ENCODE measurements at regions of chr1 and their contacts with region 1.

Region 1: GRCh38 chr1:111507411-111508201 is 4.2 kb upstream of the ADORA3 start:
- DNase-seq: peak in 34 of 35 experiments; percentile 20 to 65 (median 36)
- ATAC-seq: peak; percentile 63 to 75 (median 70)
- H3K4me3 ChIP-seq: peak overlapping the region; percentile 42 to 44
- H3K4me3 Mint-ChIP-seq: peak overlapping the region; percentile 68 to 75 (median 75)
- H3K27ac ChIP-seq: peak overlapping the region; percentile 90
- H3K27ac Mint-ChIP-seq: peak overlapping the region; percentile 95 to 98
- H3K4me1 ChIP-seq: peaks cover 66 to 88% of the 10 kb centered on the region in 2 experiments
- H3K4me1 Mint-ChIP-seq: peaks cover 56 to 59% (median 57%) of the 10 kb centered on the region in 3 donors
- H3K27me3 ChIP-seq: no peaks in the 10 kb centered on the region
- H3K27me3 Mint-ChIP-seq: no peaks in the 10 kb centered on the region

Region 2: DNA sequence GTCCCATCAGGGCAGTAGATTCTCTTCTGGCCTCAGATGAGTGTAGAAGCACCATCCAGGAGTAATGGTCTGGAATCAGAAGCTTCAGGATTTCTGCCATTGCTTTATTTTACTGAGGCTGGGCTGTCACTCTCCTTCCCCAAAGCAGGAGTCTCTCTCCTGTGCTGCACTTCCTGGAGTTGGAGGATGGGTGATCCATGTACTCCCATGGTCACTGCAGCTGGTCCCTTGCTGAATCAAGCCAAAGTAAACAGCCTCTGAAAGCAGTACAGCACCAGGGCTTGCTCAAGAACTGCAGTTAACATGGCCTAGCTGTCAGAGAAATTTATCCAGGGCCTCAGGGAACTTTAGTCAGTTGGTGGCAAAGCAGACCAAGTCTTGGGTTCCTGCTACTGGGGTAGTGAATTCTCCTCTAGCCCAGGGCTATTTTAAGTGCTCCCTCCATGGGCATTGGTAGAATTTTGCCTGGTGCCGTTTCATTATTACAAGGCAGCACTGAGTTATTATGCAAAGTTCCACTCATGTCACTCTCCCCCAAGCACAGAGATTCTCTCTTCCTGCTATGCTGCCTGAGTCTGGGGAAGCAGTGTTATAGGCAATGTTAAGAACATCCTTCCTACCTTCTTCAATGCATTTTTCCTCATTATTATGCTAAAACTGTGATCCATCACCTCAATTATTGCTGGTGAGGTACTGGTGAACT is 397.3 kb before region 1 on chr1:
- CTCF ChIA-PET with region 1: no interaction called
- POLR2A ChIA-PET with region 1: no interaction called
- DNase-seq: no peak
- ATAC-seq: no peak
- H3K4me3 ChIP-seq: no peak overlapping the region
- H3K4me3 Mint-ChIP-seq: no peak overlapping the region
- H3K27ac ChIP-seq: no peak overlapping the region
- H3K27ac Mint-ChIP-seq: no peak overlapping the region
- H3K4me1 ChIP-seq: no peaks in the 10 kb centered on the region
- H3K4me1 Mint-ChIP-seq: no peaks in the 10 kb centered on the region
- H3K27me3 ChIP-seq: no peaks in the 10 kb centered on the region
- H3K27me3 Mint-ChIP-seq: no peaks in the 10 kb centered on the region

Region 3: DNA sequence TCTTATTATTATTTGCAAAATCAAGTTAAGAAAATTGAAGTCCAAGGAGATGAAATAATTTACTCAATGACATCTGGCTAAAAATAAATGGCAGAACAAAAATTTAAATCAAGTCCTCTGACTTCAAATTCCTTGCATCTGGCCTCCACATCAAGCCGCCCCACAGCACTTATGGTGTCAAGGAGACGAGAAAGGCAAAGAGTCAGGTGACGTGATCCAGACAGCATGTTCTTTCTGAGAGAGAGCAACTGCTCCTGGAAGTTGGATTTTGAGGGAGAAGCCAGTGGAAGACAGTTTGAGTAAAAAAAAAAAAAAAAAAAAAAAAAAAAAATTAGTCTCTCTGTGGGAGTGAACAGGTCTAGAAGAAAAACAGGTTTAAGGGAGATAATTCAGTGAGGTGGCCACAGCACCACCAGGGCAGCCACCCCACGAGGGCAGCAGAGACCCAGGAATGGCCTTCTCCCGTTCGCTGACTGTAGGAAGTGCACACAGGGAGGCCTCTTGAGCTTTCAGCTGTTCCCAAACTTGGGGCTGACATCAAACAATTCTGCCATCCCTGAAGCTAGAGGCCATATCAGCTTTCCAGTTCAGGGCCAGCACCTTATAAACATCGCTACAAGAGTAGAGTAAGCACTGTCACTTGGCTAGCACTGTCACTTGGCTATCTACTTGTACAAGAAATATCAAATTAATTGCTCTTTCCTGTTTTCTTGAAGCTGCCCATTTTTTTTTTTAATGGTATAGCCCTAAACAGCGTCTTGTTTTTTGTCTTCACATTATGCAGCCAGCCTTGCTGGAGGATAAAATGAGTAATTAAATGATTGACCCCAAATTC is 26.0 kb before region 1 on chr1:
- CTCF ChIA-PET with region 1: interaction called, 3 to 32 read pairs
- POLR2A ChIA-PET with region 1: interaction called in 1 of 2 experiments, 3 read pairs
- DNase-seq: peak in 33 of 35 experiments; percentile 11 to 70 (median 36)
- ATAC-seq: peak; percentile 45 to 70 (median 64)
- H3K4me3 ChIP-seq: no peak overlapping the region
- H3K4me3 Mint-ChIP-seq: no peak overlapping the region
- H3K27ac ChIP-seq: no peak overlapping the region
- H3K27ac Mint-ChIP-seq: peak overlapping the region in 1 of 2 donors; percentile 44
- H3K4me1 ChIP-seq: peaks cover 10 to 20% of the 10 kb centered on the region in 2 experiments
- H3K4me1 Mint-ChIP-seq: peaks cover 37 to 54% (median 42%) of the 10 kb centered on the region in 3 donors
- H3K27me3 ChIP-seq: no peaks in the 10 kb centered on the region
- H3K27me3 Mint-ChIP-seq: no peaks in the 10 kb centered on the region

Region 4: DNA sequence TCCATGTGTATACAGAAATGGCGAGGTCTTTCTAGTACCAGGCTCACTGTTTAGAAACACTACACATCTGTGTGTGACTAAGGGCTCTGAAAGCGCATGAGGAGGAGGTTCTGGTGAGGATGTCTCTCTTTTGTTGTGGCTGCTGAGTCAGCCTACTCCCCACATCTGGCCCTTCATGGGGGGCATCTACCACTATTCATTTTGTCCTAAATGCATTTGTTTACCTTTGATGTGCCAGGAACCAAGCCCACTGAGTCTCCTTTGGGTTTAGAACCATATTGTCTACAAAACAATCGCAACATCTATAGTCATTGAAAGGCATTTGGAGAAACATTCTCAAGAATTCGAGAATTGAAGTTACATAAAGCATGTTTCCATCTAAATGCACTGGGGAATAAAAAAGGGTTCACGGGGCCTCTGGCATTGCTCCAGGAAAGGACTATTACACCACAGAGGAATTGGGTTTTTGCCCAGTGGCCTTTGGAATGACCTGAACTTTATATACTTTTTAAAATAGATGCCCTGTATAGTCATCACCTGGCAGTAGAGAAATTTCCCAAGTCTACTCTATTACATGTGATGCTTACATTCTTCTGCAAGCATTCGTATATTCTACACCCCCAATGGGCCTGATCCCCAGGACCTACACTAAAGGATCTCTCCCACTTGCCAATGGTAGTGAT is 30.9 kb after region 1 on chr1:
- CTCF ChIA-PET with region 1: no interaction called
- POLR2A ChIA-PET with region 1: no interaction called
- DNase-seq: no peak
- ATAC-seq: no peak
- H3K4me3 ChIP-seq: no peak overlapping the region
- H3K4me3 Mint-ChIP-seq: no peak overlapping the region
- H3K27ac ChIP-seq: no peak overlapping the region
- H3K27ac Mint-ChIP-seq: no peak overlapping the region
- H3K4me1 ChIP-seq: no peaks in the 10 kb centered on the region
- H3K4me1 Mint-ChIP-seq: no peaks in the 10 kb centered on the region
- H3K27me3 ChIP-seq: no peaks in the 10 kb centered on the region
- H3K27me3 Mint-ChIP-seq: peaks cover 5 to 8% of the 10 kb centered on the region in 2 donors

Region 5: DNA sequence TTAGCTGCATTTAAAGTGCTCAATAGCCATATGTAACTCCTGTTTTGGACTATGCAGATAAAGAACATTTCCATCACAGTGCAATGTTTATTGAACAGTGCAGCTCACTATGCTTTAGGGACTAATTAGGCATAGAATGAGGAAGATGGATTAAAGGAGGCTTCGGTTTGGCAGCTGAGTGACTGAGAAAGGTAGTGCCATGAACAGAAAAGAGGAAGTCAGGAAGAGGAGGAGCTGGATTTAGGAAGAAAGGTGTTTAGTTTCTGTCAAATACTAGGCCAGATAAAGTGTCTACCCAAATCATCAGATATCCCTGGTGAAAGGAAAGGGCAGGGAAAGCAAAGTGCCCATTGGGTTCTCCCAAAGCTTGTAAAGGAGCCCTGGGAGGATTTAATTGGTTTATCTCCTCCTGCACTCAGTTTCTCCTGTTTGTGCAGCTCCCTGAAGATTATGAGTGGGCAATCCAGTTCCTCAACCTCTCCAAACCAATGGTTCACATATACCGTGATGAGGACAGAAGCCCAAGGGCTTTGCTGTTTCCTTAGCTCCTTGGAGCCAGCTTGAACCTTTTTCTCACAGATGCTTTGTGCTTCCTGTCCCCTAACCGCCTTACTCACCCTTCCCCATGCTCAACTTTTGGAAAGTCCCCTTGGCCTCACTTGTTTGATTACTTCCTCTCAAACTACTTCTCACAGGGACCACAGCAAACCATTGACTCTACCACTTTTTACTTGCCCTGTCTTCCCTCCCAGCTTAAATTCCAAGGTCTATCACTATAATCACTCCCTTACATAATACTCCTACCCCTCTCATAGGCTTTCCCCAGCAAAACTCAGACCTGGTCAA is 108.5 kb after region 1 on chr1:
- CTCF ChIA-PET with region 1: interaction called, 7 to 10 read pairs
- POLR2A ChIA-PET with region 1: no interaction called
- DNase-seq: peak in 29 of 35 experiments; percentile 14 to 81 (median 37)
- ATAC-seq: peak in 3 of 4 experiments; percentile 12 to 50 (median 32)
- H3K4me3 ChIP-seq: no peak overlapping the region
- H3K4me3 Mint-ChIP-seq: peak overlapping the region; percentile 55 to 58 (median 57)
- H3K27ac ChIP-seq: peak overlapping the region; percentile 72
- H3K27ac Mint-ChIP-seq: peak overlapping the region; percentile 90 to 92
- H3K4me1 ChIP-seq: peaks cover 29 to 42% of the 10 kb centered on the region in 2 experiments
- H3K4me1 Mint-ChIP-seq: peaks cover 45 to 52% (median 46%) of the 10 kb centered on the region in 3 donors
- H3K27me3 ChIP-seq: no peaks in the 10 kb centered on the region
- H3K27me3 Mint-ChIP-seq: no peaks in the 10 kb centered on the region

Region 6: GRCh38 chr1:111664652-111665051 is 157.0 kb after region 1 on chr1:
- CTCF ChIA-PET with region 1: interaction called, 4 to 13 read pairs
- POLR2A ChIA-PET with region 1: no interaction called
- DNase-seq: no peak
- ATAC-seq: no peak
- H3K4me3 ChIP-seq: no peak overlapping the region
- H3K4me3 Mint-ChIP-seq: peak overlapping the region; percentile 1 to 48 (median 28)
- H3K27ac ChIP-seq: no peak overlapping the region
- H3K27ac Mint-ChIP-seq: peak overlapping the region; percentile 75 to 81
- H3K4me1 ChIP-seq: peaks cover 21 to 41% of the 10 kb centered on the region in 2 experiments
- H3K4me1 Mint-ChIP-seq: peaks cover 67 to 73% (median 70%) of the 10 kb centered on the region in 3 donors
- H3K27me3 ChIP-seq: no peaks in the 10 kb centered on the region
- H3K27me3 Mint-ChIP-seq: no peaks in the 10 kb centered on the region

Region 7: GRCh38 chr1:111755331-111756123 is 247.9 kb after region 1 on chr1 and contains the start of gene DDX20:
- CTCF ChIA-PET with region 1: interaction called, 3 to 13 read pairs
- POLR2A ChIA-PET with region 1: interaction called in 1 of 2 experiments, 3 read pairs
- DNase-seq: peak; percentile 85 to 97 (median 92)
- ATAC-seq: peak; percentile 90 to 96 (median 92)
- H3K4me3 ChIP-seq: peak within 1 kb of the TSS; percentile 82 to 91
- H3K4me3 Mint-ChIP-seq: peak within 1 kb of the TSS; percentile 91 to 97 (median 95)
- H3K27ac ChIP-seq: peak within 1 kb of the TSS; percentile 89
- H3K27ac Mint-ChIP-seq: peak within 1 kb of the TSS; percentile 98 to 99
- H3K4me1 ChIP-seq: peaks cover 13 to 18% of the 10 kb centered on the region in 2 experiments
- H3K4me1 Mint-ChIP-seq: peaks cover 43 to 55% (median 51%) of the 10 kb centered on the region in 3 donors
- H3K27me3 ChIP-seq: no peaks in the 10 kb centered on the region
- H3K27me3 Mint-ChIP-seq: no peaks in the 10 kb centered on the region
- total RNA-seq, gene DDX20: 16.7 to 19.8 (median 17.5) TPM